ENCODE measurements at regions of chr6 and their contacts with region 1.

Region 1: GRCh38 chr6:42745707-42746462 is at the start of gene TBCC:
- DNase-seq: peak; percentile 98
- H3K4me3 Mint-ChIP-seq: peak within 1 kb of the TSS; percentile 100
- H3K27ac Mint-ChIP-seq: peak within 1 kb of the TSS; percentile 99
- H3K4me1 Mint-ChIP-seq: peaks cover 25% of the 10 kb centered on the region
- H3K27me3 Mint-ChIP-seq: no peaks in the 10 kb centered on the region
- total RNA-seq, gene TBCC: 12.6 to 12.9 TPM

Region 2: DNA sequence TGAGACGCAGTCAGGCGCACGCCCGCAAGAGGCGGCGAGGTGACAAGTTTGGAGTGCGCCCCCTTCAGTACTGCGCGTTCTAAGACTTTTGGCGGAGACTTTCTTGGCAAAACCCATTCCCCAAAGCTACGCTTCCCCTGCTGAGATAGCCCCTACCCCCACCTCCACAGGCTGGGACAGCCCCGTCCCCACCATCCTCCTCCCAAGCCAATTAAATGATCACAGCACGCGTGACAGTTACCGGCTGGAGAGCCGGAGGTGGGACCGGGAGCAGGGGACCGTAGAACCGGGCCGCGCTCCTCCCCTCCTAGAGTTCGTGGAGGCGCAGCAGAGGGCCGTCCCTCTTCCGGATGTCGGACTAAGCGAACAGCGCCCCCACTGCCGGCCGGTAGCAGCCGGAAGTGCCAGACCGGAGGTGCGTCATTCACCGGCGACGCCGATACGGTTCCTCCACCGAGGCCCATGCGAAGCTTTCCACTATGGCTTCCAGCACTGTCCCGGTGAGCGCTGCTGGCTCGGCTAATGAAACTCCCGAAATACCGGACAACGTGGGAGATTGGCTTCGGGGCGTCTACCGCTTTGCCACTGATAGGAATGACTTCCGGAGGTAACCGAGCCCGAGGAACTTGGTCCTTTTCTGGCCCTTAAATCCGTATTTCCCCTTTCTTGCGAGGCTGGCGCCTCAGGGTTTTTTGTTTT is 958.5 kb before region 1 on chr6 and contains the start of gene TOMM6:
- CTCF ChIA-PET with region 1: no interaction called
- intact Hi-C with region 1: loop called (anchors 10 kb)
- DNase-seq: peak; percentile 97
- H3K4me3 Mint-ChIP-seq: peak within 1 kb of the TSS; percentile 92
- H3K27ac Mint-ChIP-seq: peak within 1 kb of the TSS; percentile 94
- H3K4me1 Mint-ChIP-seq: peaks cover 24% of the 10 kb centered on the region
- H3K27me3 Mint-ChIP-seq: no peaks in the 10 kb centered on the region
- total RNA-seq, gene TOMM6: 285 to 299 TPM

Region 3: DNA sequence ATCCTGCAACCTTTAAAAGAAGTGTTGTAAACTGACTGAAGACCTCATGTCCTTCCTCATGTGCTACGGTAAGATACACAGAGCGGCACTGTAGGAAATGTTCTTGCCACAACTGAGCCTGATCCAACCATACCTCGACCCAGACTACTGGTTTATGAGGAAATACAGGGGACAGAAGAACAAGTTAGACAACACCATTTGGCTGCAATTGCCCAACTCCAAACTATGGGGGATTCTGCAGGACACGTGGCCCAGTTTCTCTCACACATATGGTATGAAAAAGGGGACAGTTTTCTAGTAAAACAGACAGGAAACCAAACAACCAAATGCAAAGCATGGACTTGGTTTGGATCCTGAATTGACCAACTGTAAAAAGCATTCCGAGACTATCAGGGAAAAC is 34.0 kb before region 1 on chr6:
- CTCF ChIA-PET with region 1: no interaction called
- intact Hi-C with region 1: no loop called
- DNase-seq: no peak
- H3K4me3 Mint-ChIP-seq: no peak overlapping the region
- H3K27ac Mint-ChIP-seq: no peak overlapping the region
- H3K4me1 Mint-ChIP-seq: no peaks in the 10 kb centered on the region
- H3K27me3 Mint-ChIP-seq: no peaks in the 10 kb centered on the region

Region 4: DNA sequence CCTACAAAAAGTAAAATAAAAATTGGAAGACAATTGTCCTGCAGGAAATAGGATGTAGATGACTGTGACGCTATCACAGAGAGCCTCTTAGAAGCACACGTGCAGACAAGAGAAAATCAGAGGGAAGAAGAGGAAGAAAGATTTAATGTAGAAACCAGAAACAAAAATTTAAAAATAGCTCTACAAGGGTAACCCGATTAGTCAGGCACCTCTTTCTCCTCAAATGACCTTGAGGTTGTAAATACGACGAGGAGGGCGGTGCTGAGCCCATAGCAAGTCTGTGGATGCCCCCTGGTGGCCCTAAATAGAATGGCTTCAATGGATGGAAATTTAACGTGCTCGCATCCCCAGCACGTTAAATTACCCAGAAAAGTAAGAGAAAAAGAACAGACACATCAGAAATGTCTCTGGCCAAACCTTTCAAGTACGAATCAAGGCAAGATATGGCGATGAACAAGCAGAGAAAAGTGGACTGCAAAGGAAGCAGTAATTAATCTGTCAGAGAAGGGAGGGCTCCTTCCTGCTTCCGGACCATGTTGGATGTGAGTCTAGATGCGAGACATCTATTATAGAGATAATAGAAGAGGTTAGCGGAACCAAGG is 19.3 kb before region 1 on chr6:
- CTCF ChIA-PET with region 1: interaction called, 3 read pairs
- intact Hi-C with region 1: loop called (anchors 1 kb)
- DNase-seq: peak; percentile 84
- H3K4me3 Mint-ChIP-seq: peak overlapping the region; percentile 76
- H3K27ac Mint-ChIP-seq: peak overlapping the region; percentile 91
- H3K4me1 Mint-ChIP-seq: peaks cover 15% of the 10 kb centered on the region
- H3K27me3 Mint-ChIP-seq: no peaks in the 10 kb centered on the region

Region 5: DNA sequence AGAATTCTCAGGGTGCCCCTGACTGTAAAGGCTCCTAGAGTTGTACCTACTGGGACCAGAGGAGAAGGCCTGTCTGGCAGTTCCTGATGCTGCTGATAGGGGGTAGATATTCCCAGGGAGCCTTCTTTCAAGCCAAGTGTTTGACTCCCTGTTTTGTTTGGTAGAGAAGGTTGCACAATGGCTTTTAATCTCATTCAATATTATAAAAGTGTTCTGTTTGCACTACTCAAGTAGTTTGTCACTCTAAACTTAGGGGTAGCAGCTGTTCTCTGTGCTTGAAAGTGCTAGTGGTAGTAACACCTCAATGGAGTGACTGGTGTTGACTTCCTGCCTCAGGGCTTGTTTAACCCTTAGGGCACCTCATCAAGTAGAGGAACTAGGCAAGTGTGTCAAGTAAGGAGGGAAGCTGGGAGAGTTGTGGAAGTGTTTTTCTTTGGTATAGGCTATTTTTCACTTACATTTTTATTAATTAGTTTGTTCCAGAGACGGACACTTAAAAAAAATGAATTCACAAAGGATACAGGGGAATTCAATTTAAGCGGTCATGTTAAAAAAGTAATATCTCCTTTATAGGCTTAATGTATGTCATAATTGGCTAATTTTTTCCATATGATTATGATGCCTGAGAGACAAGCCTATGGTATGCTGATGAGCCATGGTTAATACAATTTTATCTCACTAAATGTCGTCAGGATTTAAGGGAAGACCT is 74.1 kb after region 1 on chr6:
- CTCF ChIA-PET with region 1: interaction called, 4 read pairs
- intact Hi-C with region 1: loop called (anchors 2 kb)
- DNase-seq: peak; percentile 29
- H3K4me3 Mint-ChIP-seq: no peak overlapping the region
- H3K27ac Mint-ChIP-seq: peak overlapping the region; percentile 31
- H3K4me1 Mint-ChIP-seq: peaks cover 23% of the 10 kb centered on the region
- H3K27me3 Mint-ChIP-seq: no peaks in the 10 kb centered on the region

Region 6: DNA sequence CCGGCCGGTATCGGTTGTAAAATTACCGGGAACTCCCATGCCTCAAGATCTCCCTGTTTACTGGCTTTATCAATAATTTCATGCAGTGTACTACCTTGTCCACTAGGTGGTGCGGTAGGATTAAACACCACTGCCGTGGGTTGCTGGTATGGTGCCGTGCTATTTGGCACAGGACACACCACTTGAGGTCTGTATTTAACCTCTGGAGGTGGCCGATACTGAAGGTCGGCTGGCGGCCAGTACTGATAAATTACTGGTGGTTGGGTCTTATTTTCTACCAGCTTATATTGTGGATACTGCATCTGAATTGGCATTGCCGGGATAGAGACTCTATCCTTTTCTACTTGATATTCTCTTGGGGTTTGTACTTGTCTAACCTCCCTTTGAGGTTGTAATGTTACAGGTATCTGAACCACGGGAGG is 155.7 kb after region 1 on chr6:
- CTCF ChIA-PET with region 1: no interaction called
- intact Hi-C with region 1: no loop called
- DNase-seq: peak; percentile 83
- H3K4me3 Mint-ChIP-seq: no peak overlapping the region
- H3K27ac Mint-ChIP-seq: no peak overlapping the region
- H3K4me1 Mint-ChIP-seq: peaks cover 11% of the 10 kb centered on the region
- H3K27me3 Mint-ChIP-seq: no peaks in the 10 kb centered on the region

Region 7: DNA sequence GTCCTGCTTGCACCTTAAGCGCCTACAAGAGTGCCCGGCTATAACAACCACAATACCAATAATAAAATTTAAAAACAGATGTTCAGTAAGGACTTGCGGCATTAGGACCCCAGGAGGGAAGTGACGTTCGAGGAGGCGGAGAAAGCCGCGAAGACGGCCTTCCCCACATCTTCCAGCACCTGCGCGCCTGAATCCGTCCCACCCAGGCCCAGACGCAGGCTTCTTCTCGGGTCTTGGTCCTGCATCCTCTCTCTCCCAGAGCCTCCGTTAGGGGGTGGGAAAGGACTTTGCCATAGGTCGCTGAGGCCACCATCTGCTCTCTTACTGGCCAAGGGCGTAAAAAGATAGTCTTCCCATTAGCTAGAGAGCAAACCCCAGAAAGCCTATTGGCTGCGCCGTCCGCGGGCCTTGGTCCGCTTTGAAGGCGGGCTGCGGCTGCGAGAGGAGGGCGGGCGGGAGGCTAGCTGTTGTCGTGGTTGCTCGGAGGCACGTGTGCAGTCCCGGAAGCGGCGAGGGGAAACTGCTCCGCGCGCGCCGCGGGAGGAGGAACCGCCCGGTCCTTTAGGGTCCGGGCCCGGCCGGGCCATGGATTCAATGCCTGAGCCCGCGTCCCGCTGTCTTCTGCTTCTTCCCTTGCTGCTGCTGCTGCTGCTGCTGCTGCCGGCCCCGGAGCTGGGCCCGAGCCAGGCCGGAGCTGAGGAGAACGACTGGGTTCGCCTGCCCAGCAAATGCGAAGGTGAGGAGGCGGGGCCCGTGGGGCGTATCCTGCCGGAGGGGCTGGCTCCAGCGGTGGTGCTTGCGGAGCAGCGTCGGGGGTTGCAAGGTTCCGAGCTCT is 183.3 kb after region 1 on chr6 and contains the start of gene CNPY3:
- CTCF ChIA-PET with region 1: no interaction called
- intact Hi-C with region 1: loop called (anchors 1 kb)
- DNase-seq: peak; percentile 98
- H3K4me3 Mint-ChIP-seq: peak within 1 kb of the TSS; percentile 100
- H3K27ac Mint-ChIP-seq: peak within 1 kb of the TSS; percentile 100
- H3K4me1 Mint-ChIP-seq: peaks cover 40% of the 10 kb centered on the region
- H3K27me3 Mint-ChIP-seq: no peaks in the 10 kb centered on the region
- total RNA-seq, gene CNPY3: 37.6 to 41.0 TPM

Region 8: GRCh38 chr6:43013843-43014433 is 268.1 kb after region 1 on chr6 and contains the starts of genes KLHDC3 and MEA1:
- CTCF ChIA-PET with region 1: no interaction called
- intact Hi-C with region 1: loop called (anchors 1 kb)
- DNase-seq: peak; percentile 100
- H3K4me3 Mint-ChIP-seq: peak within 1 kb of the TSS; percentile 95
- H3K27ac Mint-ChIP-seq: peak within 1 kb of the TSS; percentile 88
- H3K4me1 Mint-ChIP-seq: peaks cover 53% of the 10 kb centered on the region
- H3K27me3 Mint-ChIP-seq: no peaks in the 10 kb centered on the region
- total RNA-seq, gene KLHDC3: 58.6 to 58.9 TPM
- total RNA-seq, gene MEA1: 80.6 to 85.1 TPM

Measured in activated naive CD4-positive, alpha-beta T cell treated with anti-CD3 and anti-CD28 coated beads for 36 hours (primary cell).